Psoas muscle (tissue), 8 donors: ENCODE measurements at regions of chr16 and their contacts with region 1.

Region 1: DNA sequence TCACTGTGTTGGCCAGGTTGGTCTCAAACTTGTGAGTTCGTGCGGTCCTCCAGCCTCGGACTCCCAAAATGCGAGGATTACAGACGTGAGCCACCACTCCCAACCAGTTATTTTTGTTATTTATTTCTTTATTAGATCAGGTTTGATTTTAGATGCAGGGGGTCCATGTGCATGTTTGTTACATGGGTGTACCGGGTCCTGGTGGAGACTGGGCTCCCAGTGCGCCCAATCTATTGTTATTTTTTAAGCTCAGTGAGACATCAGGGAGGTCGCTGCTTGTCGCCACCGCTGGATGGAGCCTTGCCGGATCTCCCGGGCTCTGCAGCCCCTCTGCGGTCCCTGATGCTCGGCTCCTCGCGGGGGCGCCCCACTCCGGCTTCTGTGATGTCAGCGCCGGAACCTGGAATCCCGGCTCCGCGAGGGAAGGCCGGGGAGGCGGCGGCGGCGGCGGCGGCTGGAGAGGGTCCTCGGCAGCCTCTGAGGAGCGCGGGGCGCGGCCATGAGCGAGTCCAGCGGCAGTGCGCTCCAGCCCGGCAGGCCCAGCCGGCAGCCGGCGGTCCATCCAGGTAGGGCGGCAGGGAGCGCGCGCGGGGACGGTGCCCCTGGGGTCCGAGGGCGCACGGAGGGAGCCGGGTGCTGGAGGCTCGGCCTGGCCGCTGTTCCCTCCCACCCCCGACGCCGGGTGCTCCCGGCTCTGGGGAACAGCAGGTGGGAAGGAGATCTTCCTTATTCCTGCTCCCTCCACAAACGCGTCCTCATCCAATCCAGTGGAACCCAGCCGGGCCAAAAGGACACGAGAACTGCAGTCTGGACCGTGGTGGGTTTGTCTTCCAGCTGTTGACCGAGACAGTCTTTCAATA is at the start of gene TMC7:
- DNase-seq: peak; percentile 71 to 81
- ATAC-seq: peak; percentile 93 to 97 (median 96)
- H3K4me3 ChIP-seq: peak within 1 kb of the TSS; percentile 67
- H3K27ac ChIP-seq: peak within 1 kb of the TSS; percentile 61
- H3K4me1 ChIP-seq: no peaks in the 10 kb centered on the region
- H3K27me3 ChIP-seq: no peaks in the 10 kb centered on the region
- CTCF ChIP-seq: peak; percentile 68
- total RNA-seq, gene TMC7: 0.32 to 1.8 (median 0.85) TPM

Region 2: DNA sequence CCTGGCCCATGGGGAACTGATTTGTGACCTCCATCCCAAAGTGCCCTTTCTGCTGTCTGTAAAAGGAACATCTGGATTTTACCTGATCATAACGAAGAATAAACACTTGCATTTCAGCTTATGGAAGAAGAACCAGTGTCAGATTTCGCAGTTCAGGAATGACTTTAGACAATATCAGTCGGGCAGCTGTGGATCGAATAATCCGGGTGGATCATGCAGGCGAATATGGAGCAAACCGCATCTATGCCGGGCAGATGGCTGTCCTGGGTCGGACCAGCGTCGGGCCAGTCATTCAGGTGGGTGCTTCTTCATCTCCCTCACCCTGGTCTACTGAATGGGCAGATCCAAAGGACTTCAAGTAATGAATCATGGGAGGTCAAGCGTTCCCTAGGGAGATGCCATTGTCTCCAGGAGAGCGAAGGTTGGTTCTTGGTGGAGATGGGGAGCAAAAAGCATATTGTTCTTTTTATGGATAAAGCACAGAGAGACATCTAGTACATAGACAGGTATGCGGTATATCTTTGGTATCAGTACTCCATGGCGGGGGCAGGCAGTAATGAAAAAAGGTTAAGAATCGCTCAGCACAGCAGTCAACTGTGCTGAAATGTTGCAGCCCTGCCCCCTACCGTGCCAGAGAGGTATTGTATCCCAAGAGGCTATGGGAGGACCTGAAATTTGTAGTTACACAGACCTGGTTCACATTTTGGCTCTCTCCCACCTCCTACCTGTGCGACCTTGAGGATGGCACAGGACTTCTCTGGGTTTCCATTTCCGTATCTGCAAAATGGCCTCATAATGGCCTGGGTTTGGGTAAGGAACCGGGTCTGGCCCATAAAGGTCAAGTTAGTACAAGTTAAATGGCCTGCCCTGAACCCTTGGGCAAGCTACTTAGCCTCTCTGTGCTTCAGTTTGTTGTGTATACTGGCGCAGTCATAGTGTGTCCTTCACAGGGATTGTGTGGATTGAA is 88.3 kb after region 1 on chr16:
- intact Hi-C with region 1: loop called (anchors 5 kb)
- DNase-seq: peak; percentile 25 to 58
- ATAC-seq: no peak
- H3K4me3 ChIP-seq: no peak overlapping the region
- H3K27ac ChIP-seq: no peak overlapping the region
- H3K4me1 ChIP-seq: peaks cover 32% of the 10 kb centered on the region
- H3K27me3 ChIP-seq: no peaks in the 10 kb centered on the region
- CTCF ChIP-seq: peak; percentile 56

Region 3: DNA sequence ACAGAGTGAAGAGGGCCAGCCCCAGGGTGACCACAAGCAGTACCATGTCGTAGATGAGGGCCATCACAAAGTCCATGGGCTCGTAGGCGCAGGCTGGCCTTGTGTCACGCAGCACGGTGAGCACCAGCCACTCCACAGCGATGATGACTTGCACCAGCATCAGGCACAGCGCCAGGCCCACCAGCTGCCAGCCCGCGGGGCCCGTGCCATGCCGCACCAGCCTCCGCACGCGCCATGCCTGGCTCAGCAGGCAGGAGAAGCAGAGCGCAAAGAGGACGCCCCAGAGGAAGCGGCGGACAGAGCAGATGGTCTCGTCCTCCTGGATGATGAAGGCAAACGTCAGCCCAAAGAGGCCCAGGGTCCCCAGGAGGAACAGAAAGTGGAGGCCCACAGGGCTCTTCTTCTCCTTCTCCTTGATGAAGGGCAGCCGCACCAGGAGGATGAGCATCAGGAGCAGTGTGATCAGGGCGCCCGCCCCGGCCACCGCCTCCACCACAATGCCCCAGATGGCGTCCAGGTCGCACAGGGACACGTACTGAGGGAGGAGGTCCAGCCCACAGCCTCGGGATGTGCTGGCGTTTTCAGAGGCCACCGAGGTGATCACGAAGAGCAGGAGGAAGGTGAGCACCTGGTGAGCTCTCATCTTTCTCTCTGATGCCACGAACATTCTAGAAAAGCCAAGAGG is 888.5 kb after region 1 on chr16:
- intact Hi-C with region 1: no loop called
- DNase-seq: peak in 1 of 2 donors; percentile 63
- ATAC-seq: peak; percentile 18 to 52 (median 30)
- H3K4me3 ChIP-seq: no peak overlapping the region
- H3K27ac ChIP-seq: peak overlapping the region; percentile 36
- H3K4me1 ChIP-seq: peaks cover 33% of the 10 kb centered on the region
- H3K27me3 ChIP-seq: no peaks in the 10 kb centered on the region
- CTCF ChIP-seq: no peak